B cell (primary cell): ENCODE measurements at regions of chr7 and their contacts with region 1.

Region 1: DNA sequence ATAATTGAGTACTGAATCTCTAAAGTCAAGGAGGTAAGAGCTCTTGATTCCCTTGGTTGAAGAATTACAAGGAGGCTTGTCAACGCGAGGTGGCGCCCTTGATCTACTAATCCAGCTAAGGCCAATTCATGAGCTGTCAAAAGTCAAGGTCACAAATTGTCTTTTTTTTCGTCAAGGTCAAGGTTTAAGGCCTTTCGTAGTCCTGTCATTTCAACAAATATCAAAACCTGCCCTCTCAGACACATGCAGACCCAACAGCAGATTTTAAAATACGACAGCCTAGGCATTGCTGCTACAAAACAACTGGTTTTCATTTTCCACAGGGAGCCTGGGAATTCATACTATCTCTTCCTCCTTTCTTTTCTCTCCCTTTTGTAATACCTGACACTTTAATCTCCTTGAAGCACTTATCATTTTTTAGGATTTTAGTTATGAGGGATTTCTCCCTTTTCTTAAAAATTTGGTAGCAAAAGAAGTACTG is 3.6 kb downstream of the HOXA13 start:
- DNase-seq: peak; percentile 84
- ATAC-seq: no peak
- H3K4me3 ChIP-seq: no peak overlapping the region
- H3K4me3 Mint-ChIP-seq: no peak overlapping the region
- H3K27ac ChIP-seq: no peak overlapping the region
- H3K27ac Mint-ChIP-seq: peak overlapping the region; percentile 64
- H3K4me1 ChIP-seq: peaks cover 44 to 64% of the 10 kb centered on the region in 2 donors
- H3K4me1 Mint-ChIP-seq: peaks cover 34% of the 10 kb centered on the region
- H3K27me3 ChIP-seq: peaks cover 3 to 82% (median 76%) of the 10 kb centered on the region in 4 experiments
- H3K27me3 Mint-ChIP-seq: peaks cover 79% of the 10 kb centered on the region
- CTCF ChIP-seq: peak; percentile 96

Region 2: DNA sequence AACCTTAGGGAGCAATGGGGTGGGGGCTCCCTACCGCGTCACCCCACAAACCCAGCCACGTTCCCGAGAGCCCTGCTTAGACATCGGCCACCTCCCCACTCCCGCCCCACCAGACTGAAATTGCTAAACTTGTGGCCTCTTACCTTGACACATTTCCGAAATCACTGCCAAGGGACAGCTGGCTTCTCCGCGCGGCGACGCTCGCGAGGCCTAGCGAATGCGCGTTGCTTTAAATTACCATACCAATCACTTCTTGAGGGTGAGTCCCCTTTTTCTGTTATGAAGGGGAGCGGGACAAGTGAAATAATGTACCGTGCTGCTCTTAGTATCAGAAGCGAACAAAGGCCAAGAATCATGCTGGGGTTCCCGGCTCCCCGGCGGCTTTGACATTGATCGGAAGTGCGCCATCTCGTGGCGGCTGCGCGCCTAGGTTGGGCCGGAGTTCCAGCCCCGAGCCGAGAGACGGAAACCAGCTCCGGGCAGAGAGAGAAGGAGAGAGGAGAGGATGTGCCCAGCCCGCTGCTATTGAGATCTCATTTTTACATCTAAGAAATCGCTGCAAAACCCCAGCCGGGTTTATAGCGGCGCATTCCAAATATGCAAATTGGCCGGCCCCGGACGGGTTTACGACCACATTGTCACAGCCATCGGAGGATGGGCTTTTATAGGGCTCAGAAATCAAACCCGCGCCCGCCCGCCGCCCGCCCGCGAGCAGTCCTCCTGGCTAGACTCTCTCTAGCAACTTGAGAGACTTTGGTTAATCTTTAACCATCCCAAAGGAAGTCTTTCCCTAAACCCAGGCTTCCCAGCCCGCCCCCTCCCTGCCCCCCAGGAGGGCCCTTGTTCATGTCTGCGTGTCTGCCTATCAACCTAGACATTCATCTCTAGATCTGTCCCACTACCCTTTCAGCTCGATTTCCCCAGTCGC is 16.6 kb before region 1 on chr7:
- CTCF ChIA-PET with region 1: interaction called, 15 read pairs
- POLR2A ChIA-PET with region 1: interaction called, 3 read pairs
- intact Hi-C with region 1: no loop called
- DNase-seq: peak; percentile 74
- ATAC-seq: peak; percentile 58
- H3K4me3 ChIP-seq: peak overlapping the region in 1 of 5 experiments; percentile 34
- H3K4me3 Mint-ChIP-seq: peak overlapping the region; percentile 58
- H3K27ac ChIP-seq: no peak overlapping the region
- H3K27ac Mint-ChIP-seq: peak overlapping the region; percentile 87
- H3K4me1 ChIP-seq: peaks cover 26 to 39% of the 10 kb centered on the region in 2 donors
- H3K4me1 Mint-ChIP-seq: peaks cover 17% of the 10 kb centered on the region
- H3K27me3 ChIP-seq: peaks cover 0 to 94% (median 75%) of the 10 kb centered on the region in 4 experiments
- H3K27me3 Mint-ChIP-seq: peaks cover 64% of the 10 kb centered on the region
- CTCF ChIP-seq: peak; percentile 77

Region 3: DNA sequence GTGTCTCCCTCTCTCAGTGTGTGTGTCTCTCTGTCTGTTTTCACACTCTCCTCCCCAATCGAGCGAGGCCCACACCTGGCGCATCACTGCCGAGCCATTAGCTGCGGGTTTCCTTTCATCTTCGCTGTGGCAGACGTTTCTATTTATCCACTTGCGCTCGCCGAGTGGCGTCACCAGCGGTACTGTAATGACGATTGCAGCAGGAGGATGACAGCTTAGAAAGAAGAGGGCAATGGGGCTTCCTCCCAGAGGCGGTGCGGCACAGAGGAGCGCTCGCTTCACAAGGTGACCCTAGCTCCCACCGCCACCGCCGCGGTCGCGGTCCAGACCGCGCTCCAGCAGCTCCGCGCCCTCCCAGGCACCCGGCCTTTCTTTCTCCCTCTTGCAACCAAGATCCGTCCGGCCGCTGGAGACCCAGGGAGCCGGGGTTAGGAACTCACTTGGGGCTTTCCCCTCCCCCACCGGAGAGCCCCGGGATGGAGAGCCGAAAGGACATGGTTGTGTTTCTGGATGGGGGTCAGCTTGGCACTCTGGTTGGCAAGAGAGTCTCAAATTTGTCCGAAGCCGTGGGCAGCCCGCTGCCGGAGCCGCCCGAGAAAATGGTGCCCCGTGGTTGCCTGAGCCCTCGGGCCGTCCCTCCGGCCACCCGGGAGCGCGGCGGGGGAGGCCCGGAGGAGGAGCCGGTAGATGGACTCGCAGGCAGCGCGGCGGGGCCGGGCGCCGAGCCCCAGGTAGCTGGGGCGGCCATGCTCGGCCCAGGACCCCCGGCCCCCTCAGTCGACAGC is 46.4 kb after region 1 on chr7 and contains the start of gene EVX1:
- CTCF ChIA-PET with region 1: interaction called, 11 read pairs
- POLR2A ChIA-PET with region 1: no interaction called
- intact Hi-C with region 1: loop called (anchors 5 kb)
- DNase-seq: peak; percentile 58
- ATAC-seq: no peak
- H3K4me3 ChIP-seq: no peak within 1 kb of the TSS
- H3K4me3 Mint-ChIP-seq: peak within 1 kb of the TSS; percentile 41
- H3K27ac ChIP-seq: no peak within 1 kb of the TSS
- H3K27ac Mint-ChIP-seq: peak within 1 kb of the TSS; percentile 22
- H3K4me1 ChIP-seq: peaks cover 29 to 60% of the 10 kb centered on the region in 2 donors
- H3K4me1 Mint-ChIP-seq: peaks cover 23% of the 10 kb centered on the region
- H3K27me3 ChIP-seq: peaks cover 0 to 97% (median 72%) of the 10 kb centered on the region in 4 experiments
- H3K27me3 Mint-ChIP-seq: peaks cover 72% of the 10 kb centered on the region
- CTCF ChIP-seq: no peak
- total RNA-seq, gene EVX1: not detected in 2 replicates

Region 4: DNA sequence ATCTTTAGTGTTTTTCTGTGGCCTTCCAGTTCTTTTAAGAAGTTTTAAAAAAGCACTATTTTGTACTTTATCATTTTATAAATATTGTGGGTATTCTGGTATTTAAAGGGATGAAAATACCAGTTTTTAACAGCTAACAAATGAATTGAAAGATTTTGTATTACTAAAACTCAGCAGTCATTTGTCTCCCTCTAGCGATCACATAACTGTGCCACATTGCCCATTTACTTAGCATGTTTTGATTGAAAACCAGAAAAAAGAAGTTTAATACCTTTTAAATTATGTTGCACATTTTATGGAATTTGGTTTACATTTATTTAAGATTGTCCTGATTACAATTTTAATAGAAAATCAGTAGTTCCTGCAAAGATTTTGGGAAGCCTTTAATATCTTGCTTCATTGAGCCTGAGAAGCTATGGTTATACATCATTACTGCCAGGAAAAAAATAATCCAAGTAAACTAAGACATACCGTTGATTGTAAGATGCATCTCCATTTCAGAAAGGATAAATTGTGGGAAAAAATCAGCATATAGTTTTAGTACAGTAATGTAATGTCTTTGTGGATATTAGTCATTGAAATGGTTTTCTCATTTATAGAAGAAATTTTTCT is 578.5 kb after region 1 on chr7:
- CTCF ChIA-PET with region 1: interaction called, 25 read pairs
- POLR2A ChIA-PET with region 1: no interaction called
- intact Hi-C with region 1: loop called (anchors 1 kb)
- DNase-seq: peak; percentile 24
- ATAC-seq: no peak
- H3K4me3 ChIP-seq: no peak overlapping the region
- H3K4me3 Mint-ChIP-seq: no peak overlapping the region
- H3K27ac ChIP-seq: no peak overlapping the region
- H3K27ac Mint-ChIP-seq: no peak overlapping the region
- H3K4me1 ChIP-seq: no peaks in the 10 kb centered on the region
- H3K4me1 Mint-ChIP-seq: no peaks in the 10 kb centered on the region
- H3K27me3 ChIP-seq: no peaks in the 10 kb centered on the region
- H3K27me3 Mint-ChIP-seq: no peaks in the 10 kb centered on the region
- CTCF ChIP-seq: peak; percentile 65

Region 5: GRCh38 chr7:28020302-28020940 is 824.1 kb after region 1 on chr7:
- CTCF ChIA-PET with region 1: interaction called, 32 read pairs
- POLR2A ChIA-PET with region 1: no interaction called
- intact Hi-C with region 1: no loop called
- DNase-seq: peak; percentile 62
- ATAC-seq: peak; percentile 69
- H3K4me3 ChIP-seq: no peak overlapping the region
- H3K4me3 Mint-ChIP-seq: no peak overlapping the region
- H3K27ac ChIP-seq: no peak overlapping the region
- H3K27ac Mint-ChIP-seq: no peak overlapping the region
- H3K4me1 ChIP-seq: no peaks in the 10 kb centered on the region
- H3K4me1 Mint-ChIP-seq: peaks cover 26% of the 10 kb centered on the region
- H3K27me3 ChIP-seq: no peaks in the 10 kb centered on the region
- H3K27me3 Mint-ChIP-seq: no peaks in the 10 kb centered on the region
- CTCF ChIP-seq: peak; percentile 83

Region 6: DNA sequence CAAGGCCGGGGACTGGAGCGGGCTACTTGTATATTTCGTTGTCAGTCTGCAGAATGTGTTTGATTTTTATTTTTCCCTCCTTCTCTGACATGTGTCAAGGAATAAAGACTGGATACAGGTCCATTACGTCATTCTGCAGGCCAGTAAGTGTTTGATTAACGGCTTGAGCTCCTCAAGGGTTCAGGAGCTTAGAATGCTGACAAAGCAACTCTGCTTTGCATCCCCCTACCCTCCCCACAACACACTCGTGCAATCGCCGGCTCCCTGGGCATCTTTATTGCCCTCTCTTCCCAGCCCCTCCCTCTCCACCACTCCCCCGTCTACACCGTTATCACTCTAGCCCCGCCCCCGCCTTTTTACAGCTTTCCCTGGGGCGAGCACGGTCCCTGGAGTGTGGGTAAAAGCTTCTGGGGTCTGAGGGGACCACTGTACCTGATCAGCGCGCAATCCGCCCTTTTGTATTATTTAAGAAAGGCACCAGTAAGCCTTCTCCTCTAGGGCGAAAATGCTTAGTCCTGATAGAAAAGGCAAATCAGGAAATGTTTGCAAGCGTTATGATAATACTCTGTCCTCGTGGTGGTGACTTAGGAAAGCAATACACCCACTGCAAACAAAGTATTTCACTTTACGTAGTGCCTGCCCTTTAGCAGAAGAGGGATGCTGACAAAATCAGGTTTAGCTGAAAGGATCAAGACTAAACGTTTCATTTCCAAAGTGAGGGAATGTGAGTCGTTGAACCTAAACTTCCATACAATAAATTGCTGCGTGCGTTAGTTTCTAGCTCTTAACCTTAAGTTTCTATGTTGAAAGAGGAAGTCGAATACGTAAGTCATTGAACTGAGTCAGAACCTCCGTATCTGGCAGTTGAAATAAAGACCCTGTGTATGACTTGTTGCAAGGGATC is 1214.6 kb after region 1 on chr7:
- CTCF ChIA-PET with region 1: no interaction called
- POLR2A ChIA-PET with region 1: no interaction called
- intact Hi-C with region 1: loop called (anchors 5 kb)
- DNase-seq: peak; percentile 69
- ATAC-seq: peak; percentile 48
- H3K4me3 ChIP-seq: peak overlapping the region; percentile 28 to 73 (median 61)
- H3K4me3 Mint-ChIP-seq: peak overlapping the region; percentile 87
- H3K27ac ChIP-seq: no peak overlapping the region
- H3K27ac Mint-ChIP-seq: no peak overlapping the region
- H3K4me1 ChIP-seq: peaks cover 31 to 39% of the 10 kb centered on the region in 2 donors
- H3K4me1 Mint-ChIP-seq: peaks cover 35% of the 10 kb centered on the region
- H3K27me3 ChIP-seq: peaks cover 0 to 52% (median 43%) of the 10 kb centered on the region in 4 experiments
- H3K27me3 Mint-ChIP-seq: peaks cover 76% of the 10 kb centered on the region
- CTCF ChIP-seq: no peak